ENCODE measurements at regions of chr12 and their contacts with region 1.

Region 1: DNA sequence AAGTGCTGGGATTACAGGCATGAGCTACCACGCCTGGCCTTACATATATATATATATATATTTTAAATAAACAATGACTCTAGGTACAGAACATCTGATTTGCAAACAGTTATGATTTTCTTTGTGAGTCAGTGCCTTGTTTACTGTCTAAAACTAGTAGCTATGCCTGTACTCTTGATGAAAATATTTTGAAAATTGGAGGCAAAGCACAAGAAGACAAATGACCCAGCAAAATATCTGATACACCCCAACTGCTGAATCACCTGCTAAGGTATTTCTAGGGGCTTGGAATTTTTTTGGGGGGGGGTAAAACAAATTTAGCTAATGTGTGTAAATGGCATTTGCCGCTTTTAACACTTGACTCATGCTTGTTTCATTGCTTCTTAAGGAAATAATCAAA is 69.3 kb downstream of the SYT10 start:
- DNase-seq: peak in 1 of 2 experiments; percentile 60
- H3K4me3 ChIP-seq: no peak overlapping the region
- H3K27ac ChIP-seq: no peak overlapping the region
- H3K4me1 ChIP-seq: no peaks in the 10 kb centered on the region
- H3K27me3 ChIP-seq: no peaks in the 10 kb centered on the region
- CTCF ChIP-seq: no peak

Region 2: DNA sequence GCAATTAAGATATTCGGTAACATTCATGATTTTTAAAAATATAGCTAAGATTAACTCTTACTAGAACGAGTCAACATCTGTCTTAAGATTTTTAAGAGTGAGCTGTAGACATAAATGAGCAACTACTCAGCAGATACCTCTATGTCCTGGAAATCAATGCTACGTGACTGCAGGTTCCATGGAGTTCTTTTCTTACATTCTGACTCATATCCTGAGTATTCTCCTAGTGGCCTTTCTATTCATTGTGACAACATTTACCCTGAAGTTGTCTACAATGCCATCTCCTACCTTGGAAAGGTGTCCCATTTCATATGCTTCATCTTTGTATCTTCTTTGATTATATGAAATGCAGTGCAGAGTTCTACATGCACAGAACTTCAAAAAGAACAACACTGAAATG is 533.6 kb before region 1 on chr12:
- CTCF ChIA-PET with region 1: interaction called, 16 read pairs
- POLR2A ChIA-PET with region 1: no interaction called
- intact Hi-C with region 1: no loop called
- DNase-seq: peak in 1 of 2 experiments; percentile 52
- H3K4me3 ChIP-seq: no peak overlapping the region
- H3K27ac ChIP-seq: no peak overlapping the region
- H3K4me1 ChIP-seq: peaks cover 10% of the 10 kb centered on the region; the same call in 1 of the 2 replicates
- H3K27me3 ChIP-seq: no peaks in the 10 kb centered on the region
- CTCF ChIP-seq: no peak